ENCODE measurements at regions of chr11 and their contacts with region 1.

Region 1: DNA sequence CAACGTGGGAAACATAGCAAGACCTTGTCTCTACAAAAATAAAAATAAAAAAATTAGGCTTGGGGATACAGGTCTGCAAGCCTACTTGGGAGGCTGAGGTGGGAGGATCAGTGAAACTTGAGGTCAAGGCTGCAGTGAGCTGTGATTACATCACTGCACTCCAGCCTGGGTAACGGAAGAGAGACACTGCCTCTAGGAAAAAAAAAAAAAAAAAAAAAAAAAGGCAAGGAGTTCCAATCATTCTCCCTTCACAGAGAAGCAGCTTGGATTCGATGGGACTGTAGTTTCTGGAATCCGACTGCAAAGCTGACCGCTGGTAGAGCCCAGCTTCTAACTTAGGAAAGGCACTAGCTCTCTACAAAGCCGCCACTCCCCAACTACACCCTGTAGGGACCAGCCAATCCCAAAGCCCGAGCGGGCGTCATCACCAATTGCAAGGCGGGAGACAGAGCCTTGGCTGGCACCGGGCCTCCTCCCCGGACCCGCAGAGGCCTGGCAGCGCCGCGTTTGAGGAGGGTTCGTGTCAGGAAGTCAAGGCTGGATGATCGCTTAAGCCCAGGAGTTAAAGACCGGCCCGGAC is 699 bp upstream of the DDB2 start:
- DNase-seq: peak; percentile 68 to 88 (median 78)
- ATAC-seq: peak; percentile 77 to 79
- H3K4me3 Mint-ChIP-seq: peak overlapping the region; percentile 82 to 100 (median 99)
- H3K27ac Mint-ChIP-seq: peak overlapping the region; percentile 96 to 100 (median 99)
- H3K4me1 Mint-ChIP-seq: peaks cover 23 to 35% (median 32%) of the 10 kb centered on the region in 4 donors
- H3K27me3 Mint-ChIP-seq: no peaks in the 10 kb centered on the region

Region 2: DNA sequence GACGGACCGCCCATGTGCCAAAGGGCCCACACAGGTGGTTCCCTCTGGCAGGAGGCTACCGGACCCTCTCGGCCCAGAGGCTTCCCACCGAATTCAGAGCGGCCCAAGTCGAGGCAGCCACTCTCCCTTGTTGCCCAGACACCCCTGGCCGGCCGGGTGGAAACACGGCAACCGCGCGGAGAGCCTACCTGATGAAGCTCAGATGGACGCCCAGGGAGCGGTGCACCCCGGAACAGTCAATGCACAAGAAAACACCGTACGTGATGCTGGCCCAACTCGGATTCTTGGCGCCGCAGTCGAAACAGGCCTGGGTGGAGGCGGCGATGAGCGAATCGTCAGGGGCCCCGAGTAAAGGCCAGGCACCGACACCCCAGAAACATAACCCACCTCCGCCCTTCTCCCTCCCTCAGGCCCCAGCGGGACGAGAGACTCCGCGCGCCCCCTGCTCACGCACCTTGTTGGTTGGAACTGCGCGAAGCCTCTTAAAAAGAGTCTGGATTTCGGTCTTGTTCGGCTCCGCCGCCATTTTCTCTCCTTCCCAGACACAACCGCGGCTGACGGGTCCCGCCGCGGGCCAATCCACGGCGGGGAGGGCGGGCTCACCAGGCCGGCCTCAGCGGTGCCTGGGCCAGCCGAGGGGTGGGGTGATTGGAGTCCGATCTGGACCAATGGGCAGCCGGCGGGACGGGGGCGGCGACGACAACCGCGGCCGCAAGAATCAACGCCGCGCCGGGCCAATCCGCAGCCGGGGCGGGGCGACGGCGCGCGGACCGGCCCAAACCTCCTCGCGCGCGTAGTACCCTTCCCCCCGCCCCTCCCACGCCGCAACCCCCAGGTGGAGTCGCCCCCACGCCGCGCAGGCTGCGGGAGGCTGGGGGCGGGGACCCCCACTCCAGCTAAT is 37.5 kb before region 1 on chr11 and contains the start of gene ARFGAP2:
- POLR2A ChIA-PET with region 1: interaction called, 59 read pairs
- DNase-seq: peak; percentile 92 to 97 (median 95)
- ATAC-seq: peak; percentile 92 to 93
- H3K4me3 Mint-ChIP-seq: peak within 1 kb of the TSS; percentile 91 to 99 (median 97)
- H3K27ac Mint-ChIP-seq: peak within 1 kb of the TSS; percentile 97 to 100 (median 100)
- H3K4me1 Mint-ChIP-seq: peaks cover 22 to 53% (median 52%) of the 10 kb centered on the region in 4 donors
- H3K27me3 Mint-ChIP-seq: peaks cover 0 to 4% (median 0%) of the 10 kb centered on the region in 5 donors
- polyA plus RNA-seq, gene ARFGAP2: 97.8 to 111 (median 108) TPM

Region 3: GRCh38 chr11:47186076-47186936 is 27.8 kb before region 1 on chr11 and contains the start of gene PACSIN3:
- POLR2A ChIA-PET with region 1: interaction called, 59 read pairs
- DNase-seq: peak in 5 of 10 donors; percentile 16 to 48 (median 24)
- ATAC-seq: peak; percentile 49 to 78
- H3K4me3 Mint-ChIP-seq: peak within 1 kb of the TSS; percentile 72 to 90 (median 82)
- H3K27ac Mint-ChIP-seq: peak within 1 kb of the TSS in 1 of 10 donors; percentile 83
- H3K4me1 Mint-ChIP-seq: peaks cover 3 to 9% (median 7%) of the 10 kb centered on the region in 4 donors
- H3K27me3 Mint-ChIP-seq: peaks cover 5 to 48% (median 15%) of the 10 kb centered on the region in 5 donors
- polyA plus RNA-seq, gene PACSIN3: 0.25 TPM in 1 of 3 donors, not detected in the others

Region 4: DNA sequence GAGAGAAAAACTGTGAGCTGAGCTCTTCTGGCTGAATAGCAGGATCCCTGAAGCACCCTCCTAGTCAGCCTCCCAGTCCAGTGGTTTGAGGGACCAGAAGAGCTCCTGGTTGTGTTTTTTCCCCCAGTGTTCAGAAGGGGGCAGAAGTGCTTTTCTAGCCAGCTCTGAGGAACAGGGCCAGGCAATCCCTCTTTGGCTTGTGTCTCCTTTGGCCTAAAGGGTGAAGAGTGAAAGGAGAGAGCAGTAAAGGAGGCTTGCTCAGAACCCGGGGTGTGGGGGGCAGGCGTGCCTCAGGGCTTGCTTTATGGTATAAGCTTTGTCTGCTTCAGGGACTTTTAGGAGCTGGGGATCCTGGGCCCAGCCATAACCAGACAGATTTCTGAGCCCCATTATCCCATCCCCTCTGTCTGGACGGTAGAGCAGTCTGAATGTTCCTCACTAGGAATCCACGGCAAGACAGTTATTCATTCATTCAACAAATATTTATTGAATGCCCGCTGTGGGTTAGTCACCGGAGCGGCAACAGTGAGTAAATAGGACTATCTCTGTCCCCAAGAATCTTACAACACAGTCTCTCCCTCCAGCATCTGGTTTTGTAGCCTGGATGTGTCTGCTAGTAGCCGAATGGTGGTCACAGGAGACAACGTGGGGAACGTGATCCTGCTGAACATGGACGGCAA is 20.1 kb after region 1 on chr11:
- POLR2A ChIA-PET with region 1: interaction called, 57 read pairs
- DNase-seq: peak in 7 of 10 donors; percentile 19 to 69 (median 31)
- ATAC-seq: peak; percentile 10 to 31
- H3K4me3 Mint-ChIP-seq: peak overlapping the region; percentile 40 to 87 (median 80)
- H3K27ac Mint-ChIP-seq: peak overlapping the region; percentile 87 to 100 (median 96)
- H3K4me1 Mint-ChIP-seq: peaks cover 15 to 27% (median 22%) of the 10 kb centered on the region in 4 donors
- H3K27me3 Mint-ChIP-seq: no peaks in the 10 kb centered on the region

Region 5: DNA sequence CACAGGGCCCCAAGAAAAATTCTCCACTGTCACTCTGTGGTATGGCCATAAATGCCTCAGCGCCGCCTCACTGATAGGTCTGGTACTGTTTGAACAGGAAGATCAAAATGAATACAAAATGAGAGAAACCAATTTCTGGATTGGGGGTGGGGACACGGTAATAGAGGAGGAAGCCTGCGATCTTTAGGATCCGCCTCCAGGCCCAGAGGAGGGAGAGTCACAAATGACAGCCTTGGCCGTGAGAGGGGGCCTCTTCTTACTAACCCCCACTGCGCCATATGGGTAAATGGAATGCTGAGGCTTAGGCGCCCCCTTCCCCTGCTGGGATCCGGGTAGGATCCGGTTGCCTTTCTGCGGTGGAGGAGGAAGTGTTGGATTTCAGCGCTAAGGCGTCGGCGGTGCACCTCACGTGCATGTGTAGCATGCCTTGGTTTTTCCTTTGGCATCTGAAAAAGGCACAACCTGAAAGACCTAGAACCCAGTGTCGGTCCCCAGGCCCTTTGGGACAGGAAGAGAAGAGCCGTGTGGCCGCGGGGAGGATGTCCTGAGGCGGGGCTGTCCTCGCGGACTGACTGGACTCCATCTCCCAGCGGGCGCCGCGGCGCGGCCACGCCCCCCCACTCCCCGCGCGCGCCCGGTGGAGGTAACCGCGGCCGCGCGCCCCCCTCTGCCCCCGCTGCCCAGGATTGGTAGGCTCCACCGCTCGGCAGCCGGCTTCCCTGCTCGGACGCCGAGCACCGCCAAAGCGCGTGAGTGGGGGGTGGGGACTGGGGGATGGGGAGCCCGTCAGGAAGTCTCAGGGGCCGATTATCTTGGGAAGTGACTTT is 55.1 kb after region 1 on chr11:
- POLR2A ChIA-PET with region 1: interaction called, 16 read pairs
- DNase-seq: peak; percentile 73 to 91 (median 82)
- ATAC-seq: peak; percentile 56 to 59
- H3K4me3 Mint-ChIP-seq: peak overlapping the region; percentile 75 to 98 (median 90)
- H3K27ac Mint-ChIP-seq: peak overlapping the region; percentile 90 to 99 (median 96)
- H3K4me1 Mint-ChIP-seq: peaks cover 30 to 75% (median 60%) of the 10 kb centered on the region in 4 donors
- H3K27me3 Mint-ChIP-seq: no peaks in the 10 kb centered on the region

Measured in naive thymus-derived CD8-positive, alpha-beta T cell (primary cell).